Activated CD4-positive, alpha-beta T cell treated with anti-CD3 and anti-CD28 coated beads for 36 hours (primary cell): ENCODE measurements at regions of chr3 and their contacts with region 1.

Region 1: GRCh38 chr3:8622873-8623691 is 21.5 kb downstream of the SSUH2 start:
- DNase-seq: peak; percentile 72
- ATAC-seq: peak; percentile 86
- H3K4me3 Mint-ChIP-seq: peak overlapping the region; percentile 6
- H3K27ac Mint-ChIP-seq: no peak overlapping the region
- H3K4me1 Mint-ChIP-seq: no peaks in the 10 kb centered on the region
- H3K27me3 Mint-ChIP-seq: peaks cover 12% of the 10 kb centered on the region

Region 2: DNA sequence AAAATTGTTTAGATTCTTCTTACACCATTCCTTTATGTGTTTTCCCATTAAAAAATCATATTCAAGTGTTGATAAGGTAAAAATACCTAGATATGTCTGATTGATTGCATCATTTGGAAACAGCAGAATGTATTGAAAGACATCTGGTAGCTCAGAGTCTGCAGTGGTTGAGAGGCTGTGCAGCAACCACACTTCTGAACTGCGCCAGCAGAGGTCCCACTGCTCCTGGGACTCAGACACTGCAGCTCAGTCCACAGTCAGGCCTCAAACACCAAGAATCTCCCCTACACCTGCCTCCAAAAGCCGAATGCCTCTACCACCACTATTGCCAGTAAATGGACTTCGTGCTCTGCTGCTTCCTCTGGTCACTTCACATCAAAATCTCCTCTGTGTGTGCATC is 298.3 kb before region 1 on chr3:
- CTCF ChIA-PET with region 1: no interaction called
- POLR2A ChIA-PET with region 1: no interaction called
- intact Hi-C with region 1: loop called in 1 of 2 experiments (anchors 5 kb)
- DNase-seq: peak; percentile 71
- ATAC-seq: peak; percentile 58
- H3K4me3 Mint-ChIP-seq: no peak overlapping the region
- H3K27ac Mint-ChIP-seq: no peak overlapping the region
- H3K4me1 Mint-ChIP-seq: peaks cover 14% of the 10 kb centered on the region
- H3K27me3 Mint-ChIP-seq: no peaks in the 10 kb centered on the region

Region 3: DNA sequence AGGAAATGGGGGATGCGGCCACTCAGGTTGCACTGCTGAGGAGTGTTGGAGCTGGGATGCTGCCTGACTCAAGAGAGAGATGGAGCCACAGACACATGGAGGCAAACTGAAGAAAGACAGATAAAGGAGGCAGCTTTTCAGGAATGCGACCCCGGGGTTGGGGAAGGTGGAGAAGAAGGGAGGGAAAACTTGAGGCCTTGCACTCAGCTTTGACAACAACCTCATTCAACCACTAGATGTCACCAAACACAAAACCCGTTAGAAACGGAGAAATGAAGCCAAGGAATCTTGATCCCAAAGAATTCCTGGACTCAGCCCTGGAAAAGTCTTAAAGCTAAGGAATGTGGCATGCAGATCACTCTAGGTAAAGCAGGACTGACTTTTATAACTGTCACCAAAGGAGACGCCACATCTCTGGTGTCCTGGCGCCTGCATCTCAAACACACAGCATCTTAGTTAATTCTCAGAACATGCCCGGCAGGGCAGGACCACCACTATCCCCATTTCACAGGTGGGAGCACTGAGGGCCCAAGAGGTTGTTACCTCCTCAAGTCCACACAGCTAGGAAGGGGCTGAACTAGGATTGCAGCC is 181.0 kb before region 1 on chr3:
- CTCF ChIA-PET with region 1: interaction called, 4 read pairs
- POLR2A ChIA-PET with region 1: no interaction called
- intact Hi-C with region 1: loop called (anchors 1 to 2 kb)
- DNase-seq: no peak
- ATAC-seq: no peak
- H3K4me3 Mint-ChIP-seq: no peak overlapping the region
- H3K27ac Mint-ChIP-seq: no peak overlapping the region
- H3K4me1 Mint-ChIP-seq: no peaks in the 10 kb centered on the region
- H3K27me3 Mint-ChIP-seq: peaks cover 7% of the 10 kb centered on the region

Region 4: DNA sequence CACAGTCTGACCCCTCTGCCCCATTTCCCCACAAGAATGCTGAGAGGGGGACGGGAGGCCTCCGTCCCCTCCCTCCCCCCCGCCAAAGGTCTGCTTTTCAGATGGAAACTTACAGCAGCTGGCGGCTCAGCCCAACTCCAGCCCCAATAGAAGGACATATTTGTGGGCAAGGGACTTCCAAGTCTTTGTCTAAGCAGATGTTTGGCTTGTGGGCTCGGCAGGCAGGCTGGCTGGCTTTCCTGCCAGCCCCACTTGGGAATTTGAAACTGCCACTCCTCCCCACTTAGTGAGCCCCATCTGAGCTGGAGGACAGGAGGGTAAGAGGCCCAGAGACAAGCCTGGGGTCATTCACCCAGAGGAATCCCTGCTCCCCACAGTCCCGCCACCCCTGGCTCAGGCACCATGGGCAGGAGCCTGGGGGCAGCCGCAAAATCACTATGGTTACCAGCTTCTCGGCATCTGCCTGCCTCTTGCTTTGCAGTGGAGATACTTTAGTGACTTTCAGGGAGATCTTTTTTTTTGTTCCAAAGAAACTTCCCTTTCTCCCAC is 67.9 kb before region 1 on chr3:
- CTCF ChIA-PET with region 1: no interaction called
- POLR2A ChIA-PET with region 1: no interaction called
- intact Hi-C with region 1: no loop called
- DNase-seq: no peak
- ATAC-seq: no peak
- H3K4me3 Mint-ChIP-seq: no peak overlapping the region
- H3K27ac Mint-ChIP-seq: no peak overlapping the region
- H3K4me1 Mint-ChIP-seq: no peaks in the 10 kb centered on the region
- H3K27me3 Mint-ChIP-seq: no peaks in the 10 kb centered on the region

Region 5: DNA sequence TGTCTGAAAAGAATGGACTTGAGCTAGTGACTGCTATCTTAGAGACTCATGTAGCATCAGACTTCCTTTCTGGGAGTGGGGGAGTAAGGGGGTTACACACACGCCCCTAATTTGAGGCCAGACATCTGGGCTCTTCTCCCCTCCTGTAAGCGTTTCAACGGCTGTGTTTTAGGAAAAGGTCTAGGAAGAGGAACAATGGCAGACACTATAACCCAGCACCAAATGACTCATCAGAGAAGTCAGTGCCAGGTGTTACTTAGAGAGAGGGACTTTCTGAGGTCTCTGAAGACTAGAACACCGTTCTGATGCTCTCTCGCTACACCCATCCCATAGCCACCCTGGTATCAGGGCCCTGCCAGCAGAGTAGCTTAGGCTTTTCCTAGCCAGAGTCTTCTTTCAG is 44.0 kb before region 1 on chr3:
- CTCF ChIA-PET with region 1: no interaction called
- POLR2A ChIA-PET with region 1: no interaction called
- intact Hi-C with region 1: no loop called
- DNase-seq: no peak
- ATAC-seq: no peak
- H3K4me3 Mint-ChIP-seq: no peak overlapping the region
- H3K27ac Mint-ChIP-seq: no peak overlapping the region
- H3K4me1 Mint-ChIP-seq: no peaks in the 10 kb centered on the region
- H3K27me3 Mint-ChIP-seq: no peaks in the 10 kb centered on the region